ENCODE measurements at regions of chr2 and their contacts with region 1.

Region 1: GRCh38 chr2:27363933-27364332 is 6.2 kb downstream of the EIF2B4 start:
- DNase-seq: no peak
- H3K4me3 ChIP-seq: no peak overlapping the region
- H3K27ac ChIP-seq: no peak overlapping the region
- H3K4me1 ChIP-seq: peaks cover 2 to 4% of the 10 kb centered on the region in 2 donors
- H3K27me3 ChIP-seq: no peaks in the 10 kb centered on the region
- CTCF ChIP-seq: no peak
- POLR2A ChIP-seq: no peak

Region 2: DNA sequence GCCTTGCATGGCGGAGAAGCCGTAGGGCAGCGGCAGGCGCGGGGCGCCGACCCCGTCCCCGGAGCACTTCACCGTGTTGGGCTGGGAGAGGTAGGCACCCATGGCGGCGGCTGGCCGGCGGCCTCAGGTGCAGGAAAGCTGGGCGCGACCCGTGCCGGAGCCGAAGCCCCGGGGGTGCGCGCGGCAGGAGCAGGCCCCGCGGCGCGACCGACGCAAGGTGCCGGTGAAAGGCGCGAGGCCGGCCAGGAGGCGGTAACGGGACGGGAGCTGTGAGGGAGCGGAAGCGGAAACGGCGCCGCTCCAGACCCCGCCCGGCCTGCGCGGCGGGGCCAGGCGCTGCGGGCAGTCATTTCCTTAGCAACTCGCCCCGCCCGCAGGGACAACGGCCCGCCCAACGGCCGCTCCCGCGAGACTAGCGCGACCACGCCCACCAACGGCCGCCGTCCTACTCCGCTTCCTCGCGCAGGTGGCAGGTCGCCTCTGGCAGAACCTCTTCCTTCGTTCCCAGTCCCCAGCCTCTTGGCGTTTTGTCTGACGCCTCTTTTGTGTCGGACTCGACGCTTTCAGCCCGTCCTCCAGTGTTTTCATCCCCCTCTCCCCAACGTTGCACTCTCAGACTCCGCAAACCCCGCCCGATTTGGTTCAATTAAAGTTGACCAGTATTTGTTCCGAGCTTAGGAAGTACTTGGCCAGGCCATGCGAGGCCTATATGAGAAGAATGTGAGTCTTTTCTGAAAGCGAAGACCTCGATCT is 45.6 kb after region 1 on chr2 and contains the start of gene PPM1G:
- intact Hi-C with region 1: no loop called
- DNase-seq: peak; percentile 90 to 97
- H3K4me3 ChIP-seq: peak within 1 kb of the TSS; percentile 81 to 100 (median 96)
- H3K27ac ChIP-seq: peak within 1 kb of the TSS; percentile 78 to 86
- H3K4me1 ChIP-seq: peaks cover 0 to 4% of the 10 kb centered on the region in 2 donors
- H3K27me3 ChIP-seq: no peaks in the 10 kb centered on the region
- CTCF ChIP-seq: no peak
- POLR2A ChIP-seq: peak; percentile 49
- total RNA-seq, gene PPM1G: 46.2 to 59.0 (median 54.4) TPM

Region 3: DNA sequence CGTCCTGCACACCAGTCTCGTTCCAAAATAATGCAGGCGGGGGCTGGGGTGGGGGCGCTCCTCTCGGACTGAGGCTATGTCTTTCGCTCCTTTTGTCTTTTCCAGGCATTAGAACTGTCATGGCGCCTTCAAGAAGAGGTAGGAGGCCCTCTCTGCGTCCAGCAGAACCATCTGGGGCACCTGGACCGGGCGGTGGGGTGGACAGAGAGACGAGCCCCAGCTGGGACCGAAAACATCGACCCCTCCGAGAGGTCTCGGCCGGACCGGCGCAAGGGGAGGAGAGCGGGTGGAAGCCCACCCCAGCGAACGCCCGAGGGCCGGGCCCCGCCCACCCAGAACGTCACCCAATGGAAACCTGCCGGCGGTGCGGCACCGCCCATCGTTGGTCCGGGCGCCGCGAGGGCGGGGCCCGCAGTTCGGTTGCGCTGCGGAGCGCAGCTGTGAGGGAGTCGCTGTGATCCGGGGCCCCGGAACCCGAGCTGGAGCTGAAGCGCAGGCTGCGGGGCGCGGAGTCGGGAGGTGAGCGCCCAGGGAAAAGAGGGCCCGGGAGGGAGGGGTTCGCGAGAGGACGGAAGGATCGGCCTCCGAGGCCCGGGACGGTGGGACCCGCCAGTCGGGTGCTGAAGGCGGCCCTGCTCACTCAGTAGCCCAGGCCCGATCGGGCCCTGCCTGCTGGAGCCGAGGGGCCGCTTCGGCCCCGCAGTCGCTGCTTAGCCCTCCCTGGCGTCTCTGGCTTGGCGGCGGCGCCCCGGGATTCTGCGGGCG is 64.5 kb after region 1 on chr2 and contains the start of gene NRBP1:
- intact Hi-C with region 1: loop called (anchors 5 kb)
- DNase-seq: peak; percentile 77 to 92
- H3K4me3 ChIP-seq: peak within 1 kb of the TSS; percentile 73 to 96 (median 90)
- H3K27ac ChIP-seq: peak within 1 kb of the TSS; percentile 97
- H3K4me1 ChIP-seq: peaks cover 0 to 8% of the 10 kb centered on the region in 2 donors
- H3K27me3 ChIP-seq: no peaks in the 10 kb centered on the region
- CTCF ChIP-seq: peak in 1 of 3 donors; percentile 13
- POLR2A ChIP-seq: peak; percentile 91
- total RNA-seq, gene NRBP1: 70.5 to 87.5 (median 80.3) TPM

Measured in breast epithelium (tissue), 4 donors.